WTC11 (cell line): ENCODE measurements at regions of chr2 and their contacts with region 1.

Region 1: DNA sequence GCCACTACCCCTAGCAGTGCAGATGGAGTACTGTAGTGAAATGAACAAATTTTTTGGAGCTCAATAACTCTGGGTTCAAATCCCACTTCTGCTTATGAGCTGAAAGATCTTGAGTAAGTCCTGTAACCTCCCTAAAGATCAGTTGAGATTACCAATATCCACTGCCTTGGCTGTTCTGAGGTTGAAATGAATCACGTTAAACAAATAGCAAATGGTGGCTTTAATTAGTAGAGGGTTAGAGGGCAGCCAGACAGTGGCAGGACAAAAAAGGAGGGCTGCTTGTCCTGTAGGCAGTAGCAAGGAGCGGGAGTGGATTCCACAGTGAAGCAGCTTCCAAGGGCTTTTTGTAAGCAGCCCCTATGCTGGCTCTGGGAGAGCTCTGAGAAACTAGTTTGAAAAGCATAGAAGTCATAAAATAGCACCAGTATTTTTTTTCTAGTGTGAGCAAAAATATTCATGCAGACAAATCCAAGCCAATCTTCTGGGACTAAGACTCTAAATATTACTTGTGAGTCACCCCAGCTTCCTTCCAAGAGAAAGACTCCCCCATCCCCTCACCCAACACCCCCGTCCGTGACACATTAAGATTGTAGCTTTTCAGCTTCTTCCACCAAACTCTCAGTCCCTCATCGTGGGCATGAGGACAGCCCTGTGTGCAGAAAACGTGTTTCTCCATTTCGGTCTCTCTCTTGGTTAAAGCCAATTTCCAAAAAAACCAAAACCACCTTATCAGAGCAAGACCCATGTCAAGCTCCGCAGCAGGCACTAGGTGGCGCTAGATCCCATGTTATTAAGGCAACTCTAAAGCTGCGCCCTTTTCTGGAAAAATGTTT is 123.5 kb upstream of the LGALSL start:
- DNase-seq: peak; percentile 84
- ATAC-seq: peak; percentile 77
- H3K4me3 Mint-ChIP-seq: peak overlapping the region; percentile 46
- H3K27ac Mint-ChIP-seq: peak overlapping the region; percentile 86
- H3K4me1 Mint-ChIP-seq: peaks cover 61% of the 10 kb centered on the region
- H3K27me3 Mint-ChIP-seq: no peaks in the 10 kb centered on the region; the same call in 1 of the 2 replicates
- CTCF ChIP-seq: peak; percentile 83

Region 2: DNA sequence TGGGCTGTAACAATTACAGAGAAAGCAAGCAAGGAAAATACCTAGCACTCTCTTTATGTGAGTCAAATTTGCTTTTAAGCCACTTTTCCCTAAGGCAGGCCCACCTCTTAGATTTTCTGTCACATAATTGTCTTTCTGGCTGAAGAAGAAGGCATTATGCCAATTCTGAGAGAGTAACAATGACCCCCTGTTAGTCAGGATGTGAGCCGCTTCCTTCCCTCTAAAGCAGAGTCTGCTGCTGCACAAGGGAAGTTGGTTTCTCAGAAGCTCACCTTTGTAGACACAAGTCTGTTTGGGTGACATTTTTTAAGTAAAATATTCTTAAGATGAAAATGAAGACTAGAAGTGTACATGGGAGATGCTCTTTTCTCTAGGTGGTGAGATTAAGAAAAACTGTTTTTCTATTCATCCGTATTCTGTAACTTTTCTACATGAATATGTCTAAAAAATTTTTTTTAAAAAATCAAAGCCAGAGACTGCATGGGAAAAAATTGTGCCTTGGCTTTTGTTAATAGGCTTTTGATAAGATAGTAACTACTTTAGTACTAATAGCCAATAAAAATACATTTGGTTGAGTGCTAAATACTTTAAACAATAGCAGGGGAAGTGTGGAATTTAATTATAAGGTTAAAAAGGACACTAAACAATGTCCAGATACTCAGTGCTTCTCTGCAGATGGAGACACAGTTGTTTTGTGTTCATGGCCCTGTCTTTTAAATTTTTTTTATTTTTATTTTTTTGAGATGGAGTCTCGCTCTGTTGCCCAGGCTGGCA is 277.8 kb before region 1 on chr2:
- CTCF ChIA-PET with region 1: interaction called, 101 read pairs
- POLR2A ChIA-PET with region 1: no interaction called
- DNase-seq: no peak
- ATAC-seq: no peak
- H3K4me3 Mint-ChIP-seq: no peak overlapping the region
- H3K27ac Mint-ChIP-seq: no peak overlapping the region
- H3K4me1 Mint-ChIP-seq: peaks cover 40% of the 10 kb centered on the region
- H3K27me3 Mint-ChIP-seq: no peaks in the 10 kb centered on the region
- CTCF ChIP-seq: no peak

Region 3: DNA sequence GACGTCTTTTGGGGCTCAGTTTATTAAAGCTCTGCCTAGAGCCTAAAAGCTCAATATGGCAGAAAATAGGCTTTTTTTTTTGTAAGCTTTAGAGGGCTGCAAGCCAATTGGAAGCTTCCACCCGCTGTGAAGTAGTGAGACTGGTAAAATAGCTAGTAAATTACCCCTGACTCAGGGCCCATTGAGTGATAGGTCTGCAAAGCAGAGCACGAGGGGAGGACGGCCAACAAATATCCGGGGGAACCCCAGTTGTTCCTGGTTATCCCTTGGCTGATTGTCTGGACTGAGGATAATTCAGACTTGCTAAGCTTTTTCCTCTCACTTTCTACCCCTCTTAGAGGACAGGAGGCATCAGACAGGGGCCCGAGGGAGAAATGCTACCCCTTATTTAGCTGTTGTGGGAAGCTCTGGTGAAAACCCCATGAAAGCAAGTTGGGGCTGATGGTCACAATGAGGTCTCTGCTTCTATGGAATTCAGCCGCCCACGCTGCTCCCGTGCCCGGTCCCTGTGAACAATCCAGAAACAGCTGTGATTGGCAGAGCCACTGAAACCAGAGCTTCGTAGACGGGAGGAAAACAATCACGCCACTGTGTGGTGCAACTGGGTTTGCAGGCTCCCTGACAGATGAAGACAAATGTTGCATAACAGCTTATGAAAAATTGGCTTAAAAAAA is 18.4 kb before region 1 on chr2:
- CTCF ChIA-PET with region 1: interaction called, 27 read pairs
- POLR2A ChIA-PET with region 1: no interaction called
- DNase-seq: no peak
- ATAC-seq: peak; percentile 63
- H3K4me3 Mint-ChIP-seq: no peak overlapping the region
- H3K27ac Mint-ChIP-seq: no peak overlapping the region
- H3K4me1 Mint-ChIP-seq: peaks cover 31% of the 10 kb centered on the region
- H3K27me3 Mint-ChIP-seq: peaks cover 10% of the 10 kb centered on the region
- CTCF ChIP-seq: no peak

Region 4: DNA sequence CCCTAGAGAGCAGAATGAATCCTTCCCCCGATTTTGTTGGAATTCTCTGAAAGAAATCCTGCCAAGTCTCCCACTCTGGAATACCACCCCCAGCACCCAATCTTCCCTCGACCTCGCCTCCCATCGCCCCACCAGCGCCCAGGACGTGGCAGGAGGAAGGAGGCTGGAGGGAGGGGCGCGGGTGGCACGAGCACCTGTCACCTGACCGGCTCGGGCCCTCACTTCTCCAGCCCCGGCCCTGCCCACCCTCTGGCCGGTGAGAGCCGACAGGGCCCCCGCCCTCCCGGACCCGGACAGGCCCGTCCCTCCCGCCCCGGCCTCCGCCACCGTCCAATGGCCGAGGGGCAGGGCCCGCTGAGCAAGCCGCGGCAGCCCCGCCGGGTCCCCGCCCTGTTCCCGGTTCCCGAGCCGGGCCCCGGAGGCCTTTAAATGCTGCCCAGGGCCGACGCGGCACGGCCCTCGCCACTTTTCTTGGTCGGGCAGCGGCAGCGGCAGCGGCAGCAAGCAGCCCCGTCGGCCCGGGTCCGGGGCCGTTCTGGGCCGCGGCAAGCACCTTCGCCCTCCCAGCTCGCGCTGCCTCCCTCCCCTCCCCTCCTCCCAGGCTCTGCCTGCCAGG is 123.4 kb after region 1 on chr2 and contains the start of gene LGALSL:
- CTCF ChIA-PET with region 1: interaction called, 15 read pairs
- POLR2A ChIA-PET with region 1: interaction called, 4 read pairs
- DNase-seq: peak; percentile 85
- ATAC-seq: peak; percentile 85
- H3K4me3 Mint-ChIP-seq: peak within 1 kb of the TSS; percentile 91
- H3K27ac Mint-ChIP-seq: peak within 1 kb of the TSS; percentile 98
- H3K4me1 Mint-ChIP-seq: peaks cover 37% of the 10 kb centered on the region
- H3K27me3 Mint-ChIP-seq: no peaks in the 10 kb centered on the region
- CTCF ChIP-seq: no peak
- total RNA-seq, gene LGALSL: 21.0 to 26.5 TPM (median 24.2 TPM) in 3 replicates

Region 5: DNA sequence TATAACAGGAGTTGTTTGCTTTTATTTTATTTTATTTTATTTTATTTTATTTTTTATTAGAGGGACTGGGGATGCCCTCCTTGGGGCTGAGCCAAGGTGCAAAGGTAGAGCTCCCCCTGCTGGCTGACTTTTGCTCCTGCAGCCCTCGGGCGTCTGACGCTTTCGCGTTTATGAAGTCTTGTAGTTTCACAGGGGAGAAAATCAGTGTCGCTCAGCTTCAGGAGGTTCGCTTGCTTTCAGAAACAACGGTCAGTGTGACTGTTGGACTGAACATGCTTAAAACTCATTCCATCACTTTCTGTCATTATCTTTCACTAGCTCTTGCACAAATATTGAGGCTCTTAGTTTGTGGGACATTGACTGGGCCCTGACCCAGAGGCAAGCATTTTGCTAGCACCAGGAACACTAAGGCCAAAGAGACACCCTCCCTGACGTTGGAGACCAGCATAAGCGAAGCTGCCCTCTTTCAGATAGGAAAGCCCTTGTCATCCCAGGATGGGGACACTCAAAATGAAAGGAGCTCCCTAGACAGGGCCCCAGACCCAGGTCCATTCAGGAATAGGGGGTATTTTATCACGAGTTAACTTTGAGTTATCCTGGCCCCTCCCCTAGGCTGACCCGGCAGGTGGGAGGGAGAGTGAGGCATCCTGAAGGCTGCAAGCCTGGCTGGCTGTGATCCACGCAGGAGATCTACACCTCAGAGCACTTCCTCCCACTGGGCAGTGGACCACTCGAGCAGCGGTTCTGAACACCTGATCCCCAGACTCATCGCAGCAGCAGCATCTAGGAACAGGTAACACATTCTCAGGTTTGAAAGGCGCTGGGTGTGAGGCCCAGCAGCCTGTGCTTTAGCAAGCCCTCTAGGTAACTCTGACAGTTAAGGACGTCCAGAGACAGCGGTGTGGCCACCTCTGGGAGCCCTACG is 157.8 kb after region 1 on chr2:
- CTCF ChIA-PET with region 1: interaction called, 188 read pairs
- POLR2A ChIA-PET with region 1: interaction called, 7 read pairs
- DNase-seq: peak; percentile 91
- ATAC-seq: peak; percentile 82
- H3K4me3 Mint-ChIP-seq: no peak overlapping the region
- H3K27ac Mint-ChIP-seq: no peak overlapping the region
- H3K4me1 Mint-ChIP-seq: peaks cover 31% of the 10 kb centered on the region
- H3K27me3 Mint-ChIP-seq: no peaks in the 10 kb centered on the region
- CTCF ChIP-seq: peak; percentile 94

Region 6: GRCh38 chr2:64562148-64562784 is 231.8 kb after region 1 on chr2:
- CTCF ChIA-PET with region 1: interaction called, 21 read pairs
- POLR2A ChIA-PET with region 1: no interaction called
- DNase-seq: no peak
- ATAC-seq: no peak
- H3K4me3 Mint-ChIP-seq: no peak overlapping the region
- H3K27ac Mint-ChIP-seq: no peak overlapping the region; the same call in 1 of the 2 replicates
- H3K4me1 Mint-ChIP-seq: peaks cover 27% of the 10 kb centered on the region
- H3K27me3 Mint-ChIP-seq: no peaks in the 10 kb centered on the region
- CTCF ChIP-seq: no peak

Region 7: GRCh38 chr2:64609227-64609941 is 278.9 kb after region 1 on chr2:
- CTCF ChIA-PET with region 1: interaction called, 16 read pairs
- POLR2A ChIA-PET with region 1: no interaction called
- DNase-seq: peak; percentile 70
- ATAC-seq: peak; percentile 81
- H3K4me3 Mint-ChIP-seq: peak overlapping the region; percentile 74
- H3K27ac Mint-ChIP-seq: no peak overlapping the region
- H3K4me1 Mint-ChIP-seq: peaks cover 7% of the 10 kb centered on the region
- H3K27me3 Mint-ChIP-seq: peaks cover 32% of the 10 kb centered on the region
- CTCF ChIP-seq: no peak; the same call in 1 of the 2 replicates